ENCODE measurements at regions of chr22 and their contacts with region 1.

Region 1: DNA sequence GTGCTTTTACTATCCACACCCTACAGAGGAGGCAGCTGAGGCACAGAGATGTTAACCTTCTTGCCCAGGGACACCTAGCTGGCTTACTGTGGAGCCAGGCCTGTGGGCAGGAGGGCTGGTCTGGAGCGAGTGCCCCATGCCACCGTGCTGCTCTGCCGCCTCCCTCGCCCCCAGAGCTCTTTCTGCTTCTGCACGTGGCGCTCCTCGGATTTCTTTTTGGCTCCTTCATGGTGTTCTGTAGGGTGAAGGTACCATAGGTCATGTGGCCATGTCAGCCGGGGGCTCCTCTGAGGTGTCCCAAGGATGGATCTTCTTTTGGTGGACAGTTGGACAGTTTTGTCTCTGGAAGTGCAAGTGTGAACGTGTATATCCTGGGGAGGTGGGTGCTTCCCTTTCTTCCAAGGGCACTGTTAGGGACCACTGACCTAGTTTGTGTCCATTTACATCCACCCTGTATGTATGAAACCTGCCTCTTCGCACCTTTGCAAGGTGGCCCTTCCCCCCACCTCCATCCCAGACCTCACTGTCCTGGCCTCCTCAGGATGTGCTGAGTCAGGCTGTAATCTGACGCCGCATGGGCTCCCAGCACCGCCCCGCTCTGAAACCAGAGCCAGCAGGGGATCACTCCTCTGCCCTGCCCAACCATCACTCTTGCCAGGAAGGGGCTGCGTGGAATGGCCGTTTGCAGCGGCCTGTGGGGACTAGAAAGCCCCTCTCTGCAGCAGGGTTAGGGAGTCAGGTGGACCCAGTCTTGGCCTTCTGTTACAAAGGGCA is 31.7 kb downstream of the POLR3H start:
- DNase-seq: no peak

Region 2: GRCh38 chr22:41471568-41471967 is 41.0 kb before region 1 on chr22:
- in situ Hi-C with region 1: loop called (anchors 5 kb)
- DNase-seq: no peak